ENCODE measurements at regions of chr17 and their contacts with region 1.

Region 1: DNA sequence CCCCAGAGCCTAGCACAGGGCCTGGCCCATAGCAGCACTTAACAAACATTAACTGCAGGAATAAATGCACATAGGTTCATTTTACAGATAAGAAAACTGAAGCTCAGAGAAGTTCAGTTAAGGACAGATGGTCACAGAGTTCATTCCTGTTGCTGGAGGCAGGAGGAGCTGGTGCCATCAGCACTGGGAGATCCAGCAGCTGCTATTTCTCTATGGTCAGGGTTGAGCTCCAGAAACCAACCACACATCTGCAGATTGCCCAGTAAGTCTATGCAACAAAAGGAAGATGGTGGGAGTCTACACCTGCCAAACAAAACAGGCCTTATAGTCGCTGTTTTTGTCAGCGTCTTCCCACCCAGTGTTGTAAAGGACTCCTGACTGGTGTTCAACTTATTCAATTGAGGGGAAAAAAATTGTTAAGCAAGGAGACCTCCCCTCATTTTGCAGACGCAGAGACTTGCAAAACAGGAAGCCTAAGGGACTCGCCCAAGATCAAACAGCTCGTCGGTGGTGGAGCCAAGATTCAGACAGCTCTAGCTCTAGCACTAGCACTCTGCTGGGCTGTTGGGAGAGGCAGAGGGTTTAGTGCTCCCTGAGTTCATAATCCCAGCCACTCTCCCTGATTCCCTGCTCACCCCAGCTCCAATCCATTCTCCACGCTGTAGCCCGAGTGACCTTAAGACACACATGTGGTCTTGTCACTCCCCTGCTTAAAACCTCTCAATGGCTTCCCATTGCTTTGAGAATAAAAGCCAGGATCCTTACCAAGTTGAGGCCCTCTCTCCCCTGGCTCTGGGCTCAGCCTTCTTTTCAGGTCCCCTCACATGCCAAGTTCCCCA is 9.0 kb downstream of the NOG start:
- DNase-seq: peak in 13 of 14 experiments; percentile 36 to 81 (median 60)
- ATAC-seq: peak; percentile 85
- H3K4me3 ChIP-seq: no peak overlapping the region
- H3K4me3 Mint-ChIP-seq: peak overlapping the region; percentile 31
- H3K27ac ChIP-seq: peak overlapping the region; percentile 72 to 89
- H3K27ac Mint-ChIP-seq: peak overlapping the region; percentile 96
- H3K4me1 ChIP-seq: peaks cover 59% of the 10 kb centered on the region
- H3K4me1 Mint-ChIP-seq: peaks cover 84% of the 10 kb centered on the region
- H3K27me3 ChIP-seq: peaks cover 7 to 8% of the 10 kb centered on the region in 2 experiments
- H3K27me3 Mint-ChIP-seq: peaks cover 12% of the 10 kb centered on the region
- CTCF ChIP-seq: no peak

Region 2: DNA sequence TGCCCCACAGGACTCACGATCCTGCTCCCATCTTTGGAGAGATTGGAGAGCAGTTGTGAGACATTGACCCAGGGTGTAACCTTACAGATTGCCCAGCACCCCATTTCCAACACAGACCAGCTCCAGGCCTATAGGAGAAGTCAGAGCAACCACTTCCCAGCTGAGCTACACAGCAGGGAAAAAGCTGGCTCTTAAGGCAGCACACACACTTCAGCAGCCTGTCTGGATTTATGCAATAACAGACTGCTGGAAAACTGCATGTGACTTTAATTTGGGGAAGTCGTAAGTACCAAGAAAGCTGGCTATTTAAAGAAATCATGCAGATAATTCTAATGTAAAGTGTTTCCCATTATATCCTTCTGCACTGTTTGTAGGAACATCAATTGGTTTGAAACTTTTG is 21.8 kb after region 1 on chr17:
- CTCF ChIA-PET with region 1: interaction called, 3 read pairs
- POLR2A ChIA-PET with region 1: interaction called, 29 read pairs
- intact Hi-C with region 1: loop called in 1 of 2 experiments (anchors 2 kb)
- DNase-seq: no peak
- ATAC-seq: no peak
- H3K4me3 ChIP-seq: no peak overlapping the region
- H3K4me3 Mint-ChIP-seq: no peak overlapping the region
- H3K27ac ChIP-seq: no peak overlapping the region
- H3K27ac Mint-ChIP-seq: no peak overlapping the region
- H3K4me1 ChIP-seq: no peaks in the 10 kb centered on the region
- H3K4me1 Mint-ChIP-seq: peaks cover 4% of the 10 kb centered on the region
- H3K27me3 ChIP-seq: no peaks in the 10 kb centered on the region
- H3K27me3 Mint-ChIP-seq: peaks cover 4% of the 10 kb centered on the region
- CTCF ChIP-seq: no peak

Region 3: GRCh38 chr17:56629531-56630075 is 27.1 kb after region 1 on chr17:
- CTCF ChIA-PET with region 1: interaction called, 3 read pairs
- POLR2A ChIA-PET with region 1: interaction called, 29 read pairs
- intact Hi-C with region 1: loop called in 1 of 2 experiments (anchors 2 kb)
- DNase-seq: peak in 6 of 14 experiments; percentile 3 to 49 (median 26)
- ATAC-seq: peak; percentile 86
- H3K4me3 ChIP-seq: no peak overlapping the region
- H3K4me3 Mint-ChIP-seq: no peak overlapping the region
- H3K27ac ChIP-seq: no peak overlapping the region
- H3K27ac Mint-ChIP-seq: no peak overlapping the region
- H3K4me1 ChIP-seq: no peaks in the 10 kb centered on the region
- H3K4me1 Mint-ChIP-seq: peaks cover 9% of the 10 kb centered on the region
- H3K27me3 ChIP-seq: no peaks in the 10 kb centered on the region
- H3K27me3 Mint-ChIP-seq: peaks cover 4% of the 10 kb centered on the region
- CTCF ChIP-seq: peak; percentile 47

Region 4: GRCh38 chr17:56653877-56654276 is 51.4 kb after region 1 on chr17:
- CTCF ChIA-PET with region 1: no interaction called
- POLR2A ChIA-PET with region 1: interaction called, 21 read pairs
- intact Hi-C with region 1: no loop called
- DNase-seq: peak; percentile 45 to 86 (median 54)
- ATAC-seq: peak; percentile 100
- H3K4me3 ChIP-seq: no peak overlapping the region
- H3K4me3 Mint-ChIP-seq: no peak overlapping the region
- H3K27ac ChIP-seq: peak overlapping the region in 1 of 2 donors; percentile 31
- H3K27ac Mint-ChIP-seq: peak overlapping the region; percentile 10
- H3K4me1 ChIP-seq: peaks cover 5% of the 10 kb centered on the region
- H3K4me1 Mint-ChIP-seq: peaks cover 7% of the 10 kb centered on the region
- H3K27me3 ChIP-seq: no peaks in the 10 kb centered on the region
- H3K27me3 Mint-ChIP-seq: no peaks in the 10 kb centered on the region
- CTCF ChIP-seq: peak; percentile 62

Region 5: GRCh38 chr17:56779898-56780733 is 177.6 kb after region 1 on chr17:
- CTCF ChIA-PET with region 1: interaction called, 9 read pairs
- POLR2A ChIA-PET with region 1: interaction called, 12 read pairs
- intact Hi-C with region 1: no loop called
- DNase-seq: peak; percentile 75 to 93 (median 85)
- ATAC-seq: peak; percentile 95
- H3K4me3 ChIP-seq: peak overlapping the region; percentile 64
- H3K4me3 Mint-ChIP-seq: peak overlapping the region; percentile 90
- H3K27ac ChIP-seq: peak overlapping the region; percentile 71 to 77
- H3K27ac Mint-ChIP-seq: peak overlapping the region; percentile 97
- H3K4me1 ChIP-seq: peaks cover 22% of the 10 kb centered on the region
- H3K4me1 Mint-ChIP-seq: peaks cover 26% of the 10 kb centered on the region
- H3K27me3 ChIP-seq: no peaks in the 10 kb centered on the region
- H3K27me3 Mint-ChIP-seq: no peaks in the 10 kb centered on the region
- CTCF ChIP-seq: peak; percentile 97